Activated CD4-positive, alpha-beta T cell treated with anti-CD3 and anti-CD28 coated beads, Interleukin-2, amount 10 ng/mL, durations not matched to agents 7 days and 5 days (primary cell): ENCODE measurements at regions of chr2 and their contacts with region 1.

Region 1: DNA sequence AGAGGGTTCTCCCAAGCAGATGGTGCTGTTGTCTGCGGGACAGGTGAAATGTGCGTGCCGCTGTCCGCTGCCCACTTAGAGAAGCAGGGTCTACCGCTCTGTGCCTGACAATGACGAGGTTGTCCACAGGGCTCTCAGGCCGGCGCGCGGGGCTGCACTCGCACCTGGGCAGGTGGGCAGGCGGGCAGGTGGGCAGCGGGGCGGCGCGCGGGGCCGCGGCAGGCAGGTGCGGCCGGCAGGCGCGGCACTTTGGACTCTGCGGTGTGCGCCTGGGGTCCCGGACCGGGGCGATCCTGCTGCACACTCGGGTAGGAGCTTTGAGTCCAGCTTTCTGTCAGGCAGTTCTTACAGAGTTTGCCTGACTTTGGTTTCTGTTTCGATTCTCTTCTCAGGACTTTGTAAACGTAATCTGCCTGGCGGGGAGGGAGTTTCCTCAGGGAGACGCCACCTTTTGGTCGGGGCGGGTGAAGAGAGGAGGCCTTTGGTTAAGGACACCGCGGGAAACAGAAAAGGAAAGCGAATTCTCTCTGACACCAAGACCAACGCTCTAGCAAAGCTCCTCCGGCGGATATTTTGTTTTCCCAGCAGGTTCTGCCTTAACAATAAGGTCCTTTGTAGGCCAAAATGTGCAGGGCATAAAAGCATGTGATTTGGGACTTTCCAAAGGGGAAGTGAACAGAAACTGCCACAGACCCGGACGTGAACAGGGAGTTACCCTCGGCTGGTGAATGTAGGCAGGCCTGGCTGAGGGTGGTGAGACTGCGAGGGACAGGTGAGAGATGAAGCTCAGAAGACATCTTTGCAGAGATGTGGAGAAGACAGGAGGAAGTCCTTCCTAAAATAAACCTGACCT is at the start of gene IFIH1:
- DNase-seq: peak; percentile 86
- H3K4me3 Mint-ChIP-seq: peak within 1 kb of the TSS; percentile 88
- H3K27ac Mint-ChIP-seq: peak within 1 kb of the TSS; percentile 98
- H3K4me1 Mint-ChIP-seq: peaks cover 61% of the 10 kb centered on the region
- H3K27me3 Mint-ChIP-seq: no peaks in the 10 kb centered on the region
- total RNA-seq, gene IFIH1: 57.3 to 65.5 TPM

Region 2: DNA sequence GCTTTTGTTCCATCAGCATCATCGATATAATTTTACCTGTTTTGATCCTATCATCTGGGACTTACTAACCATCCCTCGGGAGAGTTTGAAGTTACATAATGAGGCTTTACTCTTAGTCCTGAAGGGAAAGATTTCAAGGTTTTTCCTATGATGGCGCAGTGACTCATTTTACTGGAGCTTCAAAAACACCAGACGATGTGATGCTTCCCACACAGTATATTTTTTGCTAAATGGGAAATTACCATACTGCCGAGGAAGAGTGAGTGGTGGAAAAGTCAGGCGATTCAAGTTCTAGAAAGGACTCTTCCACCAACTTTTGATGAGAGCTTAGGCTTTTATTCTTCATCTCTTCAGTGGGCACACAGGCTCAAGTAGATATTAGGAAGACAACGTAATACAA is 121.9 kb before region 1 on chr2:
- CTCF ChIA-PET with region 1: no interaction called
- POLR2A ChIA-PET with region 1: no interaction called
- DNase-seq: no peak
- H3K4me3 Mint-ChIP-seq: no peak overlapping the region
- H3K27ac Mint-ChIP-seq: no peak overlapping the region
- H3K4me1 Mint-ChIP-seq: no peaks in the 10 kb centered on the region
- H3K27me3 Mint-ChIP-seq: peaks cover 51% of the 10 kb centered on the region

Region 3: GRCh38 chr2:162282765-162283425 is 35.7 kb before region 1 on chr2:
- CTCF ChIA-PET with region 1: no interaction called
- POLR2A ChIA-PET with region 1: no interaction called
- DNase-seq: no peak
- H3K4me3 Mint-ChIP-seq: no peak overlapping the region
- H3K27ac Mint-ChIP-seq: no peak overlapping the region
- H3K4me1 Mint-ChIP-seq: no peaks in the 10 kb centered on the region
- H3K27me3 Mint-ChIP-seq: no peaks in the 10 kb centered on the region

Region 4: GRCh38 chr2:162297925-162298552 is 20.5 kb before region 1 on chr2:
- CTCF ChIA-PET with region 1: interaction called, 17 read pairs
- POLR2A ChIA-PET with region 1: no interaction called
- DNase-seq: peak; percentile 82
- H3K4me3 Mint-ChIP-seq: no peak overlapping the region
- H3K27ac Mint-ChIP-seq: no peak overlapping the region
- H3K4me1 Mint-ChIP-seq: no peaks in the 10 kb centered on the region
- H3K27me3 Mint-ChIP-seq: no peaks in the 10 kb centered on the region